IMR-90 (cell line): ENCODE measurements at regions of chr17 and their contacts with region 1.

Region 1: DNA sequence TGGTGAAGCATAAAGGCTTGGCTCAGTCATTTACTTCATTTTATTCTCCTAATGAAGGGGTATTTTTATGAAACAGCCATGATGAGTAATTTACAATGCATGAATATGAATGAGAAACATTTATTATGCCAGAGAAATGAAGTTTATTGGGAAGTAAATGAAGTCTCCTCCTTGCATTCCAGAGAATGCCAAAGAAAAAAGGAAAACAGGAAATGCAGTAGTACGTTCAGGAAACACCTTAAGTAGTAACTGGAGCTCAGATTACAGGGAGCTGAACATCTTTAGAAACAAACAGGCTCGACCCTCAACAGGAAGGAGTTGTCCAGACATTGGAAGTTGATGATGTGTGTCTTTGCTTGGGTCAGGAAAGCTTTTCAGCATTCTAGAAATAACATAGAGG is 4.6 kb downstream of the KRT34 start:
- DNase-seq: peak; percentile 37
- ATAC-seq: peak; percentile 10; the same call in 1 of the 2 replicates
- H3K4me3 ChIP-seq: no peak overlapping the region
- H3K27ac ChIP-seq: no peak overlapping the region; the same call in 1 of the 2 replicates
- H3K4me1 ChIP-seq: peaks cover 27% of the 10 kb centered on the region
- H3K27me3 ChIP-seq: no peaks in the 10 kb centered on the region
- CTCF ChIP-seq: no peak
- POLR2A ChIP-seq: no peak
- RAD21 ChIP-seq: no peak

Region 2: DNA sequence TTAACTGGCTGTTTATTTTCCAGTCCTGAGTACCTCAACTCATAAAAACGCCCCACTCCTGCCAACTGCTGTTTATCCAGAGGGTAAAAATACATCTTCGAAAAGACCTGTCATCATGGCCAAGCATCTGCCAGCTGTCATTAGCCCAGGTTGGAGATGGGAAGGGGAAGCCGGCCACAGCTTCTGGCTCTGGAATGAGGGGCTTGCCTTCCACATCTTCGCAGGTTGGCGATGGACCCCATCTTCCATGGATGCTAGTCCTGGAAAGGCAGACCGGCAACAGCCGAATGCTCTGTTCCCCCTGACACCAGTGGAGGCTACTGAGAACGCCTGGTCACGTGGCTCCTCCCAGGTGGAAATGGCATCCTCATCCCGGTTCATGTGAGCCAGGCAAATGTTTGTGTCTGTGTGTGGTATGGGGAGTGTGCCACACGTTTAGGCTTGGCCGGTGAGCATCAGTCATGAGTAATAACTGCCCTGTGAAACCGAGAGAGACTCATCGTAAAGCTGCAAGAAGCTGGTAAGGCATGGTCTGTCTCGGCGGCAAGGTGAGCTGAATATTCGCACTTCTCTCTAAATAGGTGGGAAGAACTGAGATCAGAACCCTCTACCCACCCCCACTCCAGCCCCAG is 61.6 kb before region 1 on chr17:
- CTCF ChIA-PET with region 1: no interaction called
- POLR2A ChIA-PET with region 1: no interaction called
- dilution Hi-C with region 1: no loop called
- in situ Hi-C with region 1: loop called (anchors 10 kb)
- intact Hi-C with region 1: no loop called
- DNase-seq: no peak
- ATAC-seq: no peak
- H3K4me3 ChIP-seq: no peak overlapping the region
- H3K27ac ChIP-seq: no peak overlapping the region
- H3K4me1 ChIP-seq: no peaks in the 10 kb centered on the region
- H3K27me3 ChIP-seq: peaks cover 5% of the 10 kb centered on the region
- CTCF ChIP-seq: no peak
- POLR2A ChIP-seq: no peak
- RAD21 ChIP-seq: no peak